ENCODE measurements at regions of chr17 and their contacts with region 1.

Region 1: DNA sequence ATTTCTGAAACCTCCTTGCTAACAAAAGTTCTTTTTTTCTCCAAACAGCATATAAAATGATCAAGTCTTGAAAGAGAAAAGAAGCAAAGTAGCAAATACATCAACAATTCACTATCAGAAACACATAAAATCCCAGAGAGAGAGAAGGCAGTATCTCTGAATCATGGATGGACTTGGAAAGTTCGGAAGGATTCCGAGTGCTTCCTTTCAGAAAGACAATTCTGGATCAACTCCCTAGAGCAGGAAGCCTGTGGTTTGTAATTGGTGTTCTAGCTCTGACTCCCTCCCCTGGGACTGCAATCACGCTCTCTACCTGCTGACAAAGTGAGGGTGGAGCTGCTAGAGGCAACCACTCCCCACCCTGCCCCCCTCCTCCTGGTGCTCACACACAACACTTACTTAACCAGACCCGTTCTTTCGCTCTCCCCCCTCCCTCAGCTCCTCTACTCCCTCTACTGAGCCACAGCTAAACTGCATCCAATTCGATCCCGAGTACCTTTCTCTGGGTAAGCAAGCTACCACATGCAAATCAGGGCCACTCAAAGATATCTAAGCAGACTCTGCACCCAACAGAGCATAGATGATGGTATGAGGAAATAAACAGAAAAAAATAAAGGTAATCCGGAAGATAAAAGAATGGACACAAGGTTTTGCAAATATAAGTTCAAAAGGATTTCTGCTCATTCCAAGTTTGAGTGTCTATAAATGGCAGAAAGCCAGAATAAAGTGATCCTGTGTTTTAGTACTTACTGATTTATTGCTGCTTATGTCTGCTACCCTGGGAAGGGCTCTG is at the start of gene RNF43:
- DNase-seq: peak; percentile 63 to 94 (median 90)
- ATAC-seq: peak; percentile 100
- H3K4me3 ChIP-seq: no peak within 1 kb of the TSS
- H3K4me3 Mint-ChIP-seq: peak within 1 kb of the TSS in 6 of 10 donors; percentile 0 to 69 (median 32)
- H3K27ac ChIP-seq: peak within 1 kb of the TSS; percentile 24
- H3K27ac Mint-ChIP-seq: peak within 1 kb of the TSS; percentile 1 to 94 (median 51)
- H3K4me1 ChIP-seq: peaks cover 0 to 9% of the 10 kb centered on the region in 2 donors
- H3K4me1 Mint-ChIP-seq: peaks cover 9 to 27% (median 14%) of the 10 kb centered on the region in 7 donors
- H3K27me3 ChIP-seq: no peaks in the 10 kb centered on the region
- H3K27me3 Mint-ChIP-seq: no peaks in the 10 kb centered on the region
- total RNA-seq, gene RNF43: 0.48 to 2.2 (median 1.9) TPM

Region 2: GRCh38 chr17:58020401-58020800 is 397.1 kb before region 1 on chr17:
- CTCF ChIA-PET with region 1: no interaction called
- POLR2A ChIA-PET with region 1: no interaction called
- intact Hi-C with region 1: no loop called
- DNase-seq: no peak
- ATAC-seq: no peak
- H3K4me3 ChIP-seq: no peak overlapping the region
- H3K4me3 Mint-ChIP-seq: no peak overlapping the region
- H3K27ac ChIP-seq: no peak overlapping the region
- H3K27ac Mint-ChIP-seq: no peak overlapping the region
- H3K4me1 ChIP-seq: no peaks in the 10 kb centered on the region
- H3K4me1 Mint-ChIP-seq: no peaks in the 10 kb centered on the region
- H3K27me3 ChIP-seq: peaks cover 2 to 4% of the 10 kb centered on the region in 2 donors
- H3K27me3 Mint-ChIP-seq: peaks cover 19 to 37% (median 26%) of the 10 kb centered on the region in 5 donors

Region 3: GRCh38 chr17:58294034-58294433 is 123.5 kb before region 1 on chr17:
- CTCF ChIA-PET with region 1: no interaction called
- POLR2A ChIA-PET with region 1: no interaction called
- intact Hi-C with region 1: no loop called
- DNase-seq: no peak
- ATAC-seq: no peak
- H3K4me3 ChIP-seq: no peak overlapping the region
- H3K4me3 Mint-ChIP-seq: no peak overlapping the region
- H3K27ac ChIP-seq: no peak overlapping the region
- H3K27ac Mint-ChIP-seq: no peak overlapping the region
- H3K4me1 ChIP-seq: no peaks in the 10 kb centered on the region
- H3K4me1 Mint-ChIP-seq: no peaks in the 10 kb centered on the region
- H3K27me3 ChIP-seq: no peaks in the 10 kb centered on the region
- H3K27me3 Mint-ChIP-seq: peaks cover 0 to 58% (median 12%) of the 10 kb centered on the region in 5 donors

Region 4: DNA sequence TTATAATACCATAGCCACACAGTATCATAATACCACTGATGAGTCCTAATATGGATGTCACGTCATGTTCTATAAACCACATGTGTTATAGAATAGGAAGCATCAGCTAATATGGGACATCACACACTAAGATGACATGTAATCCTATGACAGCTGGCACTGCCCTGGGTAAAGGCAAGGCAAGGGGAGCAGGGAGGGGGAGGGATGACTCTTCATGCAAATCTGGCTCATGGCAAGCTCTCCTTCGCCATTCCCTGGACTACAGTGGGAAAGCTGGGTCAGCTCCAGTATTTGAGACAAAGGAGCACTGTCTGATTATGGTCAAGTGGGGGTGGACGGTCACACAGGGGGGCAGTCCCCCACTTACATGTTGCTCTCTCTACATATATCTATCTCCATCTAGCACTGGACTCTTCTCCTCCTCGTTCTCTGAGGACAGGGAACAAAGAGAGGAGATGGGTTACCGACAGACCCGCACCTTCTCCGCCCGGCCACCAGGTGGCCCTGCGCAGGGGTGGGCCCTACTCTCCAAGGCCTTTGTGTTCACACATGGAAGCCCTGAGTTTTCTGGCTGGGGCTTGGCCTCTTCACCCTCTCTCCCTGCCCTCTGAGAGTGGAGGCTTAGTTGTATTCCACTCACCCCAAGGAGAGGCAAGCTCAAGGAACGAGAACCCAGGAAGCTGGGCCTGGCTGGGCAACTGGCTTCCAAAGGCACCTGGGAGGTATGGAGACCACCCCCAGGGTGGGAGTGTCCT is 113.3 kb before region 1 on chr17:
- CTCF ChIA-PET with region 1: interaction called, 9 read pairs
- POLR2A ChIA-PET with region 1: no interaction called
- intact Hi-C with region 1: loop called in 1 of 2 experiments (anchors 5 kb)
- DNase-seq: peak in 8 of 9 donors; percentile 32 to 63 (median 53)
- ATAC-seq: peak; percentile 89
- H3K4me3 ChIP-seq: no peak overlapping the region
- H3K4me3 Mint-ChIP-seq: peak overlapping the region in 1 of 10 donors; percentile 38
- H3K27ac ChIP-seq: no peak overlapping the region
- H3K27ac Mint-ChIP-seq: peak overlapping the region in 1 of 9 donors; percentile 46
- H3K4me1 ChIP-seq: peaks cover 0 to 6% of the 10 kb centered on the region in 2 donors
- H3K4me1 Mint-ChIP-seq: peaks cover 0 to 7% (median 4%) of the 10 kb centered on the region in 7 donors
- H3K27me3 ChIP-seq: no peaks in the 10 kb centered on the region
- H3K27me3 Mint-ChIP-seq: peaks cover 0 to 5% (median 0%) of the 10 kb centered on the region in 5 donors

Region 5: DNA sequence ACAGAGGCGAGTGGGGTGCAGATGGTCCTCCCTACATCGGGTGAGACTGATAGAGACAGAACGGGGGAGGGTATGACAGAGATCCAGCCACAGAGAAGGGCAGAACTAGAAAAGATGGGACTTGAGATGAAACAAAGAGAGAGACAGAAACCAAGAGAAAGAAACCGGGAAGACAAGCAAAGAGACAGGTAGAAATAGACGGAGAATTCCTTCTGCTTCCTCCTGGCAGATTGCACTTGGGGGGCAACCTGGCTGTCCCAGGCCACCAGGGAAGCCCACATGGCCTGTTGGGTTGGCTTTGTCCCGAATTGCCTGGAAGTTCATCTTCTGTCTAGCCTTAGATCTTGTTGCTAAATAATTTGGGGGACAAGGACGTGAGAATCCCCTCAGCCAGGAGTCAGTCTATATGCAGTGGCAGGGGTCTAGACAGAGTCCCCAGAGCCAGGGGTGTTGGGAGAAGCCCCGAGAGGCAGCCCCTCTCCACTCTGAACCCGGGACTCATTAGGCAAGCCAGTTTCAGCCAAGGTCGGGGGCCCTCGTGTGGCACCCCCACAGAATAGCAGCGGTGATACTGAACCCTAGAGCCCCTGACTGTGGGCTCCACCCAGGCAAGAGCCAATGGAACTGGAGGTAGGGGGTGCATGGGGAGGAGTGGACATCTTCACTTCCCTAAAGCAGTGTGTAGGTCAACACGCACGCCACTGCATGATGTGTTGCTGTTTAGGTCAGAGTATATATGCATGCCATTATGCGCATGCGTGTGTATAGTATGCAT is 88.3 kb before region 1 on chr17:
- CTCF ChIA-PET with region 1: interaction called, 3 read pairs
- POLR2A ChIA-PET with region 1: interaction called, 10 read pairs
- intact Hi-C with region 1: loop called in 1 of 2 experiments (anchors 1 kb)
- DNase-seq: peak in 8 of 9 donors; percentile 52 to 83 (median 62)
- ATAC-seq: peak; percentile 62
- H3K4me3 ChIP-seq: peak overlapping the region; percentile 64
- H3K4me3 Mint-ChIP-seq: peak overlapping the region; percentile 86 to 100 (median 94)
- H3K27ac ChIP-seq: peak overlapping the region; percentile 98
- H3K27ac Mint-ChIP-seq: peak overlapping the region; percentile 91 to 98 (median 94)
- H3K4me1 ChIP-seq: peaks cover 4 to 18% of the 10 kb centered on the region in 2 donors
- H3K4me1 Mint-ChIP-seq: peaks cover 37 to 61% (median 50%) of the 10 kb centered on the region in 7 donors
- H3K27me3 ChIP-seq: no peaks in the 10 kb centered on the region
- H3K27me3 Mint-ChIP-seq: peaks cover 0 to 19% (median 0%) of the 10 kb centered on the region in 5 donors

Region 6: GRCh38 chr17:58344047-58344790 is 73.3 kb before region 1 on chr17:
- CTCF ChIA-PET with region 1: interaction called, 7 read pairs
- POLR2A ChIA-PET with region 1: interaction called, 23 read pairs
- intact Hi-C with region 1: loop called in 1 of 2 experiments (anchors 2 kb)
- DNase-seq: peak; percentile 48 to 96 (median 80)
- ATAC-seq: peak; percentile 91
- H3K4me3 ChIP-seq: peak overlapping the region; percentile 64
- H3K4me3 Mint-ChIP-seq: peak overlapping the region; percentile 80 to 100 (median 88)
- H3K27ac ChIP-seq: peak overlapping the region; percentile 98
- H3K27ac Mint-ChIP-seq: peak overlapping the region; percentile 91 to 100 (median 95)
- H3K4me1 ChIP-seq: peaks cover 72 to 78% of the 10 kb centered on the region in 2 donors
- H3K4me1 Mint-ChIP-seq: peaks cover 54 to 100% (median 87%) of the 10 kb centered on the region in 7 donors
- H3K27me3 ChIP-seq: no peaks in the 10 kb centered on the region
- H3K27me3 Mint-ChIP-seq: no peaks in the 10 kb centered on the region

Region 7: GRCh38 chr17:58369214-58370031 is 48.1 kb before region 1 on chr17:
- CTCF ChIA-PET with region 1: interaction called, 4 read pairs
- POLR2A ChIA-PET with region 1: no interaction called
- intact Hi-C with region 1: loop called in 1 of 2 experiments (anchors 5 kb)
- DNase-seq: no peak
- ATAC-seq: no peak
- H3K4me3 ChIP-seq: no peak overlapping the region
- H3K4me3 Mint-ChIP-seq: peak overlapping the region in 1 of 10 donors; percentile 6
- H3K27ac ChIP-seq: no peak overlapping the region
- H3K27ac Mint-ChIP-seq: peak overlapping the region in 2 of 9 donors; percentile 2 to 18
- H3K4me1 ChIP-seq: peaks cover 0 to 13% of the 10 kb centered on the region in 2 donors
- H3K4me1 Mint-ChIP-seq: peaks cover 4 to 26% (median 15%) of the 10 kb centered on the region in 7 donors
- H3K27me3 ChIP-seq: no peaks in the 10 kb centered on the region
- H3K27me3 Mint-ChIP-seq: no peaks in the 10 kb centered on the region

Region 8: GRCh38 chr17:58402047-58402446 is 15.4 kb before region 1 on chr17:
- CTCF ChIA-PET with region 1: no interaction called
- POLR2A ChIA-PET with region 1: no interaction called
- intact Hi-C with region 1: loop called in 1 of 2 experiments (anchors 2 kb)
- DNase-seq: no peak
- ATAC-seq: no peak
- H3K4me3 ChIP-seq: no peak overlapping the region
- H3K4me3 Mint-ChIP-seq: peak overlapping the region in 1 of 10 donors; percentile 29
- H3K27ac ChIP-seq: no peak overlapping the region
- H3K27ac Mint-ChIP-seq: no peak overlapping the region
- H3K4me1 ChIP-seq: no peaks in the 10 kb centered on the region
- H3K4me1 Mint-ChIP-seq: peaks cover 4 to 14% (median 7%) of the 10 kb centered on the region in 7 donors
- H3K27me3 ChIP-seq: no peaks in the 10 kb centered on the region
- H3K27me3 Mint-ChIP-seq: peaks cover 0 to 3% (median 0%) of the 10 kb centered on the region in 5 donors

Region 9: DNA sequence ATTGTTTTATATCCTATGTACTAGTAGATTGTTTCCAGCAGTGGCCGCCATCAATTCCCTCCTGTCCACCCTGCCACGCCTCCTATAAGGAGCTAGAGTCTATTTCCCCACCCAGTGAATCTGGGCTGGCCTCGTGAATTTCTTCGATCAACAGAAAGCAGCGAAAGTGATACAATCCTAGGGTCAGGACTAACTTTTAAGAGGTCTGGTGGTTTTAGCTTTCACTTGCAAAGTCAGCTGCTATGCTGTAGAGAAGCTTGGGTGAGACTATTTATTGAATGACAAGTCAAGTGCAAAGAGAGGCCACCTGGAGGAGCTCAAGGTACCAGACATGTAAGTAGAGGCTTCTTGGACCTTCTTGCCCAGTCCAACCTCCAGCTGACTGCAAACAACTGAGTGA is 177.8 kb after region 1 on chr17:
- CTCF ChIA-PET with region 1: no interaction called
- POLR2A ChIA-PET with region 1: no interaction called
- intact Hi-C with region 1: no loop called
- DNase-seq: no peak
- ATAC-seq: no peak
- H3K4me3 ChIP-seq: no peak overlapping the region
- H3K4me3 Mint-ChIP-seq: no peak overlapping the region
- H3K27ac ChIP-seq: no peak overlapping the region
- H3K27ac Mint-ChIP-seq: no peak overlapping the region
- H3K4me1 ChIP-seq: no peaks in the 10 kb centered on the region
- H3K4me1 Mint-ChIP-seq: peaks cover 0 to 4% (median 0%) of the 10 kb centered on the region in 7 donors
- H3K27me3 ChIP-seq: no peaks in the 10 kb centered on the region
- H3K27me3 Mint-ChIP-seq: no peaks in the 10 kb centered on the region

Measured in naive thymus-derived CD4-positive, alpha-beta T cell (primary cell).